ENCODE measurements at regions of chr4 and their contacts with region 1.

Region 1: DNA sequence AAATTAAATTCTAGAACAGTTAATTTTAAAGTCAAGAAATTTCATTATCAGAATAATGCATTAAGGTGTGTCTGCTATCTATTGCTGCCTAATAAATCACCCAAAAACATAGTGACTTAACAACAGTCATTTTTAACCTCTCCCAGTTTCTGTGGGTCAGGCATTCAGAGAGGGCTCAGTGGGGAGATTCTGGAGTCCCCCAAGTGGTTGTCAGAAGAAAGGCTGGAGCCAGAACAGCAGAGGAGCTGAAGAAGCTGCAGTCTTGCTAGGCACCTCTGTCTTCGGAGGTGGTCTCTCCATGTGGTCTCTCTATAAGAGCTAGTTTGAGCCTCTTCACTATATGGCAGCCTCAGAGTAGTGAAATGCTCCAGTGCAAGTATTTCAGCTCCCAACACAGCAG is 9.3 kb upstream of the HOPX start:
- DNase-seq: no peak

Region 2: DNA sequence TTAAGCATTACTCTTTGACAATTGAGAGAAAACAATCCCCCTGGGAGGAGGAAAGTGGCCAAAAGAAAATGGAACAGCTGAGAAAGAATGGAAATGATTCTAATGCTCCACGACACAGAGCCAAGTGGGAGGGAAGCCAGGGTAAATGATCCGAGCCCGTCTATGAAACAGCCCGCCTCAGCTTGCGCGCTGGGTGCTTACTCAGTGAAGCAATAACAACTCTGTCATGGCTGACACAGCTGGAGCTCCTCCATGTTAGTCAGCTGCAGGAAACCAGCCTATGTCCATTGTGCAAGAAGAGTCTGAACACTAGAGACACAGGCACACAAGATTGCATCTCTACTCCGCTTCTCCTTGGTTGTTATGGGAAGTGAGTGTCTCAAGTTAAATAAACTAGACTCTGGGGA is 267.7 kb after region 1 on chr4:
- CTCF ChIA-PET with region 1: interaction called, 10 read pairs
- POLR2A ChIA-PET with region 1: no interaction called
- DNase-seq: peak; percentile 46